OCI-LY7 (cell line): ENCODE measurements at regions of chr4 and their contacts with region 1.

Region 1: DNA sequence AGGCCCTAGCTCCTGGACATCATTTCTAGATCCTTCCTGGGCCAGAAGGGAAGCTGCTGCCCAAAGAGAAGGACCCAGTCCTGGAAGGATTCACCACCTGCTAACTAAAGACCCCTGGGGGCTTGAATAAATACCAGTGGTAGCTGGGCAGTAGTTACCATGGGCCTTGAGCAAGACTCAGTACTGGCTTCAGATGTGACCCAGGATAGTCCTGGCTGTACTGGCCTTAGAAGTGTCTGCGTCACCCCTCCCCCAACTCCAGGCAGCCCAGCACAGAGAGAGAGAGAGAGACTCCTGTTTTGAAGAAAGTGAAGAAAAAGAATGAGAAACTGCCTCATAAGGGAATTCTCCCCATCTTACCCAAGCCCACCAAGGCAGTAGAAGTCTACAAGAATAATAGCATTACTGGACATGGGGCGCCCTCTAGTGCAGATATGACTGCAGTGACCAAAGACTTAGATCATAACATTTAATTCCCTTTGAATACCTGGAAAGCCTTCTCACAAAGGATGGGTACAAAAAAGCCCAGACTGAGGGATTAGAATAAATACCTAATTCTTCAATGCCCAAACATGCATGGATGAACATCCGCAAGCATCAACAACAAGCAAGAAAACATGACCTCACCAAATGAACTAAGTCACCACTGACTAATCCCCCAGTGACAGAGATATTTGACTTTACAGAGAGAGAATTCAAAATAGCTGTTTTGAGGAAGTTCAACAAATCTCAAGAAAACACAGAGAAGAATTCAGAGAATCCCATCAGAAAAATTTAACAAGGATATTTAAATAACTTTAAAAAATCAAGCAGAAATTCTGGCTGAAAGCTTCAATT is 171.8 kb downstream of the HNRNPD start:
- DNase-seq: peak; percentile 77
- H3K4me3 ChIP-seq: no peak overlapping the region
- H3K27ac ChIP-seq: no peak overlapping the region
- H3K4me1 ChIP-seq: no peaks in the 10 kb centered on the region
- CTCF ChIP-seq: peak; percentile 98

Region 2: GRCh38 chr4:81919238-81919637 is 282.8 kb before region 1 on chr4:
- CTCF ChIA-PET with region 1: no interaction called
- POLR2A ChIA-PET with region 1: no interaction called
- intact Hi-C with region 1: loop called (anchors 2 kb)
- DNase-seq: peak; percentile 29
- H3K4me3 ChIP-seq: no peak overlapping the region
- H3K27ac ChIP-seq: no peak overlapping the region
- H3K4me1 ChIP-seq: no peaks in the 10 kb centered on the region
- CTCF ChIP-seq: peak; percentile 63

Region 3: DNA sequence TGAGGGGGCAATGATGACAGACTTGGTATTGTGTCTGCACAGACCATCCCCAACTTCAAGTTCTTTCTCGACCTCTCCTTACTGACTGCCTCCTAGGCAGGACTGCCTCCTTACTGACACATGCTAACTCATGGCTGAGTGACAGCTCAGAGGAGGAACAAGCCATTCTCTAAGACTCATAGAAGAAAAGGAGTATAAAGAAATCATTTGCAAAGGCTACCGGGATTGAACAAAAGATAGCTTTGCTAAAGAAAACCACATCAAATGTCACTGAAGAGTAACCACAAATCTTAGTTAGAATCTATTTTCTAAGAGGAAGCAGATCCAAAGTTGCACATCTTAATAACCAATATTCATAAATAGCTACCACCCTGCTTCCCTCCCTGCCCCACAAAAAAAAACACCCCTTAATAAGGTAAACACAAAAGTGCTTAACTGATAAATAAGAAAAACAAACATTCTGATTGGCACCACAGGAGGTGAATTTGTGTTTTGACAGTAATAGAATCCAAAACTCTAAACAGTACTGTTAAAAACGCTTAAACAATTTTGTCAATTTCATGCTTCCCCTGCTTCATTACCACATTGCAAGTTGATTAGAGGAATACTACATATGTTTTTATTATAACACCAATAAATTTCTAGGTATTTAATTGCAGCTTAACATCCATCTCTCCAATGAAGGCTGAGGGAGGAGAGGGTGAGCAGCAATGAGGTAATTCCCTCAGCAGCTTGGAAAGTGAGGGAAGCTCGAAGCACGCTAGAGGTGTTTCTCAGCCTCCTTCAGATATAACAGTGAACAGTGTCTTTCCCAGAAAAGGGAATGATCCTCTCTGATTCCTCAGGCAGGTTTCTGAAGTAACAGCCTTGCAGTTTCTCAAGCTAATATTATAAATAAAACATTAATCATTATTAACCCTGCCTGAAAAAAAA is 11.7 kb after region 1 on chr4:
- CTCF ChIA-PET with region 1: no interaction called
- POLR2A ChIA-PET with region 1: no interaction called
- intact Hi-C with region 1: no loop called
- DNase-seq: no peak
- H3K4me3 ChIP-seq: no peak overlapping the region
- H3K27ac ChIP-seq: no peak overlapping the region
- H3K4me1 ChIP-seq: no peaks in the 10 kb centered on the region
- CTCF ChIP-seq: no peak

Region 4: GRCh38 chr4:82268050-82268825 is 66.2 kb after region 1 on chr4:
- CTCF ChIA-PET with region 1: no interaction called
- POLR2A ChIA-PET with region 1: no interaction called
- intact Hi-C with region 1: loop called (anchors 2 kb)
- DNase-seq: peak; percentile 66
- H3K4me3 ChIP-seq: no peak overlapping the region
- H3K27ac ChIP-seq: no peak overlapping the region
- H3K4me1 ChIP-seq: peaks cover 18% of the 10 kb centered on the region
- CTCF ChIP-seq: peak; percentile 94